ENCODE measurements at regions of chr18 and their contacts with region 1.

Region 1: DNA sequence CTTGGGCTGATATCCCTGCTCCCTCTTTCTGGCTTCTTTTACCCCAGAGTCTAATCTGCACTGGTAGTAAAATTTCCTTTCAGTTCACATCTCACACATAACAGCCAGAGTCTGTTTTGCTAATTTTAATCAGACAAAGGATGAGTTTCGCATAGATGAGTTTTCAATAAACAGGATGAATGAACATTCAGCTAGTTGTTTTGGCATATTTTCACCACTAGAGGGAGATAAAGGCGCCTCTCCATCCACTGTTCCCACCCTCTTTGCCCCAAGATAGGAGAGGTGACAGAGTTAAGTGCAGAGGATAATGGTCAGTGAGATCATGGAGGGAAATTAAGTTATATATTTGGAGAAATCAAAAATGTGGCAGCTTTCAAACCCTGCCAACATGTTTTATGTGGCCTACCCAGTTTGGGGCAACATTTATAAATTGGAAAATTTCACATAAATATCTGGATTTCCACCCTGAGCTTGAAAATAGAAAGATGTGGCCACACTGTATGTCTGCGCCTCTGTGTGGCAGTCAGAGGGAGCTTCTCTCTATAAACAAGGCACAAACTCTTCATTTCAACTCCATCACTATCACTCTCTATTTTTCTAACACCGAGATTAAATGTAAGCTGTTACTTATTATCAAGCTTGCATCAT is 48.5 kb upstream of the DTNA start:
- DNase-seq: peak; percentile 55
- H3K4me3 ChIP-seq: no peak overlapping the region
- H3K27ac ChIP-seq: peak overlapping the region in 1 of 2 experiments; percentile 14; a peak in 1 of 4 replicates
- H3K4me1 ChIP-seq: peaks cover 7 to 17% of the 10 kb centered on the region in 2 experiments; a peak in 3 of 4 replicates
- H3K27me3 ChIP-seq: no peaks in the 10 kb centered on the region
- CTCF ChIP-seq: peak; percentile 94
- EP300 ChIP-seq: no peak
- RAD21 ChIP-seq: peak; percentile 82

Region 2: GRCh38 chr18:34352385-34353163 is 309.0 kb before region 1 on chr18:
- CTCF ChIA-PET with region 1: interaction called, 18 read pairs
- POLR2A ChIA-PET with region 1: no interaction called
- DNase-seq: peak; percentile 26
- H3K4me3 ChIP-seq: no peak overlapping the region
- H3K27ac ChIP-seq: no peak overlapping the region
- H3K4me1 ChIP-seq: no peaks in the 10 kb centered on the region; a peak in 1 of 4 replicates
- H3K27me3 ChIP-seq: no peaks in the 10 kb centered on the region
- CTCF ChIP-seq: peak; percentile 33
- EP300 ChIP-seq: no peak
- RAD21 ChIP-seq: peak; percentile 73

Region 3: GRCh38 chr18:34647251-34647650 is 14.3 kb before region 1 on chr18:
- CTCF ChIA-PET with region 1: interaction called, 32 read pairs
- POLR2A ChIA-PET with region 1: no interaction called
- DNase-seq: no peak
- H3K4me3 ChIP-seq: no peak overlapping the region
- H3K27ac ChIP-seq: no peak overlapping the region
- H3K4me1 ChIP-seq: peaks cover 0 to 5% of the 10 kb centered on the region in 2 experiments; a peak in 2 of 4 replicates
- H3K27me3 ChIP-seq: no peaks in the 10 kb centered on the region
- CTCF ChIP-seq: no peak
- EP300 ChIP-seq: no peak
- RAD21 ChIP-seq: no peak

Region 4: GRCh38 chr18:34695310-34695709 is 33.7 kb after region 1 on chr18:
- CTCF ChIA-PET with region 1: interaction called, 25 read pairs
- POLR2A ChIA-PET with region 1: no interaction called
- DNase-seq: no peak
- H3K4me3 ChIP-seq: no peak overlapping the region
- H3K27ac ChIP-seq: no peak overlapping the region
- H3K4me1 ChIP-seq: peaks cover 10 to 12% of the 10 kb centered on the region in 2 experiments; a peak in 3 of 4 replicates
- H3K27me3 ChIP-seq: no peaks in the 10 kb centered on the region; the same call in 1 of the 2 replicates
- CTCF ChIP-seq: no peak
- EP300 ChIP-seq: no peak
- RAD21 ChIP-seq: no peak

Region 5: GRCh38 chr18:34729264-34729663 is 67.7 kb after region 1 on chr18:
- CTCF ChIA-PET with region 1: no interaction called
- POLR2A ChIA-PET with region 1: no interaction called
- DNase-seq: peak; percentile 19
- H3K4me3 ChIP-seq: no peak overlapping the region
- H3K27ac ChIP-seq: no peak overlapping the region
- H3K4me1 ChIP-seq: no peaks in the 10 kb centered on the region
- H3K27me3 ChIP-seq: no peaks in the 10 kb centered on the region
- CTCF ChIP-seq: peak; percentile 64
- EP300 ChIP-seq: no peak
- RAD21 ChIP-seq: peak; percentile 28

Region 6: DNA sequence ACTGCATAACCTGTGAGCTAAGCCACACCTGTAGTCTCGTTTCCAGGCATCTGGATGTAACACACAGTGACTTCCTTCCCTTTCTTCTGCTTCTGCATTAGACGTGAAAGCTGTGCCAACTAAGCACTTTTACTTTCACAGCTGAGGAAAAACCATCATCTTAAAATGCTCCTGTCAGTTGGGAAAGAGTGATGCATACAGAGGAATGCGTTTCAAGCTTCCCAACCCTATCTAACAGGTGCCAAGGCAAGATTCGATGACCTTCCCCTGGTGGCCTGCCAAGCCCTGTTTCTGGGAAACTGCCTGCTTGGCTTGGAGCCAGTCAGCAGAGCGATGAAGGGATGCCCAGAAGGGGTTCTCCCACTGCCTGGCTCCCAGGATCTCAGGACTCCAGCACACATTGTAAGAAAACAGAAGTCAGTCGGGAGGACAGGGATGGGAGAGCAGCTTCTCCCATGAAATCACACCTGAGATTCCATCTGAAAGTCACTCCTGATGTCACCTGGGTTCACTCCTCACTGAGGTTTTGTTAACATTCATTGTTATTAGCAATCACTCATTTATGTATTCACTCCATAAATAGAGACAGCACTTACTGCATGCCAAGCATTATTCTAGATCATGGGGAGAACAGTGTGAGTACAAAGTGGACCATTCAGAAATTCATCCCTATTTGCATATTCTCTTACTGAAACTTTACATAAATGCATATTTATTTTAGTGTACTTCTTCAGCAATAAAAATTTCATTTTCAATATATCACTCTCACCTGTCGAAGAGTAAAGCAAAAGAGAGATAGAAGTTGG is 112.6 kb after region 1 on chr18:
- CTCF ChIA-PET with region 1: interaction called, 14 read pairs
- POLR2A ChIA-PET with region 1: no interaction called
- DNase-seq: peak; percentile 54
- H3K4me3 ChIP-seq: no peak overlapping the region
- H3K27ac ChIP-seq: peak overlapping the region; percentile 1 to 16; a peak in 2 of 4 replicates
- H3K4me1 ChIP-seq: peaks cover 7 to 13% of the 10 kb centered on the region in 2 experiments; a peak in 3 of 4 replicates
- H3K27me3 ChIP-seq: no peaks in the 10 kb centered on the region
- CTCF ChIP-seq: no peak
- EP300 ChIP-seq: peak; percentile 15 to 66; a peak in 2 of 4 replicates
- RAD21 ChIP-seq: no peak

Region 7: DNA sequence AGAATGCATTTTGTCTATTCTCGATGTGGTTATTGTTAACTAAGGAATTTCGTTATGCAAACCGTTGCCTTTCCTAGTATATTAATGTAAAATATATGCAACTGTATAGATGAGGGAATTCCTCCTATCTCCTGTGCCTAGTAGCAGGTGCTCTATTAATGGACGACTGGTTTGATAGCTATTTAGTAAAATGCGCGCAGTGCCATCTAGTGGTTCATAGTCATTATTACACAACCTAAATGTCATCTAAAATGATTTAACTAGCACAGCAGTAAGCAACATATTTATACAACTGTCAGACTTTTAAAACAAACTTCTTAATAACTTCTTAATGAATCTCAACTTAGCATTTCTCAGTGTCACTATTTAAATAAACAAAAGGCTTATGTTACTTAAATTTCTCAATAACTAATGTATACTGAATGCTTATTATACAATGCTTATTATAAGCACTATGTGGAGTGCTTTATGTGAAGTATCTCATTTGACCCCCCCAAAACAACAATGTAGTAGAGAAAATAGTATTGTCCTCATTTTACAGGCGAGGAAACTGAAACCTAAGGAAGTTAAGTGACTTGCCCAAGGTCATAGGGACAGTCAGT is 126.4 kb after region 1 on chr18:
- CTCF ChIA-PET with region 1: interaction called, 67 read pairs
- POLR2A ChIA-PET with region 1: no interaction called
- DNase-seq: peak; percentile 53
- H3K4me3 ChIP-seq: no peak overlapping the region; a peak in 1 of 4 replicates
- H3K27ac ChIP-seq: no peak overlapping the region
- H3K4me1 ChIP-seq: 0 out of 4 replicates have a peak, but pooled peaks cover 0 to 6% of the 10 kb centered on the region in 2 experiments
- H3K27me3 ChIP-seq: no peaks in the 10 kb centered on the region
- CTCF ChIP-seq: peak; percentile 84
- EP300 ChIP-seq: no peak
- RAD21 ChIP-seq: peak; percentile 94

Region 8: GRCh38 chr18:34818064-34818463 is 156.5 kb after region 1 on chr18:
- CTCF ChIA-PET with region 1: no interaction called
- POLR2A ChIA-PET with region 1: no interaction called
- DNase-seq: no peak
- H3K4me3 ChIP-seq: no peak overlapping the region
- H3K27ac ChIP-seq: no peak overlapping the region
- H3K4me1 ChIP-seq: no peaks in the 10 kb centered on the region
- H3K27me3 ChIP-seq: no peaks in the 10 kb centered on the region
- CTCF ChIP-seq: no peak
- EP300 ChIP-seq: no peak
- RAD21 ChIP-seq: no peak